ENCODE measurements at regions of chr12 and their contacts with region 1.

Region 1: GRCh38 chr12:116358893-116359761 is 81.6 kb upstream of the MED13L start:
- DNase-seq: peak; percentile 64
- ATAC-seq: peak; percentile 96
- H3K4me3 Mint-ChIP-seq: peak overlapping the region; percentile 65
- H3K27ac Mint-ChIP-seq: peak overlapping the region; percentile 76
- H3K4me1 Mint-ChIP-seq: peaks cover 27% of the 10 kb centered on the region
- H3K27me3 Mint-ChIP-seq: no peaks in the 10 kb centered on the region
- CTCF ChIP-seq: no peak

Region 2: DNA sequence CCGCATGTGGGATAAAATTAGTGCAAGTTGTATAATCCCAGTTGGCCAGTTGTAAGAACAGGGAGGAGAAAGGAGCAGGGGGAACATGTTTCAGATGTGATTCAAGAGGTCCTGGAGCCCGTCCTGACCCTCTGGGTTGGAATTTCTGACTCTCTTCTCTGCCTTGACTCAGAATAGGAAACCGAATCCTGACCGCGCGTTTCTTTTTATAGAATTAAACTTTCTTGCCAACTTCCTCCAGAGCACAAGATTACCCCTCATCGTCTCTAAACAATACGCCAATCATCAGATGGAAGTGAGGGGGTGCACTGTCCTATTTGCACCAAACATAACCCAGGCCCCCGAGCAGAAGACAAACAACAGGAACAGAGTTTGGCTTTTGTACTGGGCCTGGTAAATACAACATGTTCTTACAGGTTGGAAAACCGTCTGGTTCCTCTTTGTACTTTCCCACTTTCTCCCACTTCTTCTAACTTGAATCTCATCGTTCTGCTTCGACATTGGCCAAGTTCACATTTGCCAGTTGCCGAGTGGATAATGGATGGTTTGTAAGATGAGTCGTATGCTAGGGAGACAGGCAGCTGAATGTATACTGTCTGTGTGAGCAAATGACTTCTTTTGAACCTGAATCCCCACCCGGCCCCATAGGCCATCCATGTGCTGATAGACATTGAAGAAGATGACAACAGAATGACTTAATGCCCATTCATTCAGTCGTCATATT is 39.1 kb before region 1 on chr12:
- CTCF ChIA-PET with region 1: no interaction called
- POLR2A ChIA-PET with region 1: interaction called, 15 read pairs
- intact Hi-C with region 1: no loop called
- DNase-seq: no peak
- ATAC-seq: peak; percentile 29
- H3K4me3 Mint-ChIP-seq: peak overlapping the region; percentile 64
- H3K27ac Mint-ChIP-seq: peak overlapping the region; percentile 74
- H3K4me1 Mint-ChIP-seq: peaks cover 34% of the 10 kb centered on the region
- H3K27me3 Mint-ChIP-seq: no peaks in the 10 kb centered on the region
- CTCF ChIP-seq: no peak

Region 3: DNA sequence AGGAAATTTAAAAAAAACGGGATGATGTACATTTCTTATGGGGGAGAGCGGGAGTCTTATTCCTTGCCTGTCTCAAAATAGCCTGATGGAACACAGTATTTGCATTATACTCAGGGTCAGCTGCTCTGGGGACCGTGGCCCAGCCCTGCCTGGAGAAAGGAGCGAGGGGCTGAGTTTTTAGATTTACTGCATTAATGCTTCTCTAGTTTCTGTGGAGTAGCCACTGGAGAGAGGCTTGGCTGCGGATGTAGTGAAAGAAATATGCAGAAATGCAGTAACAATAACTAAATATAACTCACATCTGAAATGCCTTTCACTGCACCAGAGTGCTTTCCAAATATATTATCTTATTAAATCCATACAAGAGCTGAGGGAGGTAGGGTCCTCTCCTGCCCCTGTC is 112.4 kb after region 1 on chr12:
- CTCF ChIA-PET with region 1: no interaction called
- POLR2A ChIA-PET with region 1: no interaction called
- intact Hi-C with region 1: no loop called
- DNase-seq: no peak
- ATAC-seq: no peak
- H3K4me3 Mint-ChIP-seq: no peak overlapping the region
- H3K27ac Mint-ChIP-seq: no peak overlapping the region
- H3K4me1 Mint-ChIP-seq: peaks cover 4% of the 10 kb centered on the region
- H3K27me3 Mint-ChIP-seq: no peaks in the 10 kb centered on the region
- CTCF ChIP-seq: no peak

Measured in activated B cell treated with CpG ODN at 0.5 μM for 24 hours (primary cell).